HepG2 (cell line): ENCODE measurements at regions of chr6 and their contacts with region 1.

Region 1: GRCh38 chr6:50712291-50712690 is 1.0 kb upstream of the TFAP2D start:
- DNase-seq: no peak
- ATAC-seq: no peak
- H3K4me3 ChIP-seq: no peak overlapping the region
- H3K27ac ChIP-seq: no peak overlapping the region
- H3K4me1 ChIP-seq: no peaks in the 10 kb centered on the region
- H3K27me3 ChIP-seq: peaks cover 2 to 42% of the 10 kb centered on the region in 2 experiments; a peak in 2 of 5 replicates
- CTCF ChIP-seq: no peak
- EP300 ChIP-seq: no peak
- POLR2A ChIP-seq: no peak
- RAD21 ChIP-seq: no peak

Region 2: DNA sequence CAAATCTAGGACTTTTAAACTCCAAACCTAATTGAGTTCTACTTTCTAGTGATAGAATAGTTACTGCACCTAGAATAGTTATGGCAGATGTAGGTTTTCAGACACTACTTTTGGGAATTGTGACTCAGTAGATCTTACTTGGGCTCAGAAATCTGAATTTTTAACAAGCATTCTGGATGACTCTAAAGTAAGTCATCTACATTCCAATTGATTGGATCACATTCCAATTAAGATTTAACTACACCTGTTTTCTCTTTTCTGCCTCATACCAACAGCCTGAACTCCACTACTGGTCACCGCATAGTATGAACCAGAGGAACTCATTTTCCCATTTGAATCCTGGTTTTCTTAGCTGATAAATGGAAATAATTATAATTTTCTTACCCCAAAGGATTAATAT is 48.5 kb before region 1 on chr6:
- CTCF ChIA-PET with region 1: no interaction called
- POLR2A ChIA-PET with region 1: no interaction called
- in situ Hi-C with region 1: no loop called
- intact Hi-C with region 1: loop called (anchors 1 kb)
- DNase-seq: no peak
- ATAC-seq: no peak
- H3K4me3 ChIP-seq: no peak overlapping the region
- H3K27ac ChIP-seq: no peak overlapping the region
- H3K4me1 ChIP-seq: no peaks in the 10 kb centered on the region
- H3K27me3 ChIP-seq: no peaks in the 10 kb centered on the region
- CTCF ChIP-seq: no peak
- EP300 ChIP-seq: no peak
- POLR2A ChIP-seq: no peak
- RAD21 ChIP-seq: no peak

Region 3: GRCh38 chr6:50744976-50745375 is 32.7 kb after region 1 on chr6:
- CTCF ChIA-PET with region 1: no interaction called
- POLR2A ChIA-PET with region 1: no interaction called
- in situ Hi-C with region 1: no loop called
- intact Hi-C with region 1: no loop called
- DNase-seq: no peak
- ATAC-seq: no peak
- H3K4me3 ChIP-seq: no peak overlapping the region
- H3K27ac ChIP-seq: no peak overlapping the region
- H3K4me1 ChIP-seq: no peaks in the 10 kb centered on the region
- H3K27me3 ChIP-seq: no peaks in the 10 kb centered on the region
- CTCF ChIP-seq: no peak
- EP300 ChIP-seq: no peak
- POLR2A ChIP-seq: no peak
- RAD21 ChIP-seq: no peak

Region 4: GRCh38 chr6:50868466-50868865 is 156.2 kb after region 1 on chr6:
- CTCF ChIA-PET with region 1: no interaction called
- POLR2A ChIA-PET with region 1: no interaction called
- in situ Hi-C with region 1: no loop called
- intact Hi-C with region 1: no loop called
- DNase-seq: no peak
- ATAC-seq: no peak
- H3K4me3 ChIP-seq: no peak overlapping the region
- H3K27ac ChIP-seq: no peak overlapping the region
- H3K4me1 ChIP-seq: no peaks in the 10 kb centered on the region
- H3K27me3 ChIP-seq: no peaks in the 10 kb centered on the region
- CTCF ChIP-seq: no peak
- EP300 ChIP-seq: no peak
- POLR2A ChIP-seq: no peak
- RAD21 ChIP-seq: no peak